Ascending aorta (tissue), 2 donors: ENCODE measurements at regions of chr3 and their contacts with region 1.

Region 1: DNA sequence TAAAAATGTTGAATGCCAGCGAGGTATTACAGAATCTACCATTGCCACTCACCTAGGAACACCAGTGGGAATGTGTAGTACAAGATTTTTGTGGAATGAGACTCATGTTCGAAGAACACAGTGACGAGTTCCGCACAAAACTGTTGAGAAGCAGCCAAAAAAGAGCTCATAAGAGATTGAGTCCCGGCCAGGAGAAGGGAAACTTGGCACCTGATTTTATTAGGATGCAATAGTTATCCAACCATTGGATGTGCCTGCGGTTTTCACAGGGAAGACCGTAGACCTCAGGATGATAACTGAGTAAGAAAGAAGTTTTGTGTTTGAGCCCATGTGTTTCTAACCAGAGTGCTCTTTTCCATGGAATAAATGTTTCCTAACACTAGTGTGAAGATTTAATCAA is 88.9 kb downstream of the PTPRG start:
- DNase-seq: peak in 1 of 2 donors; percentile 80
- H3K4me3 ChIP-seq: no peak overlapping the region
- H3K27ac ChIP-seq: peak overlapping the region; percentile 22 to 33
- H3K4me1 ChIP-seq: peaks cover 0 to 8% of the 10 kb centered on the region in 2 donors
- H3K27me3 ChIP-seq: no peaks in the 10 kb centered on the region
- CTCF ChIP-seq: no peak

Region 2: GRCh38 chr3:61664095-61664482 is 13.8 kb after region 1 on chr3:
- intact Hi-C with region 1: no loop called
- DNase-seq: no peak
- H3K4me3 ChIP-seq: no peak overlapping the region
- H3K27ac ChIP-seq: no peak overlapping the region
- H3K4me1 ChIP-seq: peaks cover 0 to 16% of the 10 kb centered on the region in 2 donors
- H3K27me3 ChIP-seq: no peaks in the 10 kb centered on the region
- CTCF ChIP-seq: no peak

Region 3: DNA sequence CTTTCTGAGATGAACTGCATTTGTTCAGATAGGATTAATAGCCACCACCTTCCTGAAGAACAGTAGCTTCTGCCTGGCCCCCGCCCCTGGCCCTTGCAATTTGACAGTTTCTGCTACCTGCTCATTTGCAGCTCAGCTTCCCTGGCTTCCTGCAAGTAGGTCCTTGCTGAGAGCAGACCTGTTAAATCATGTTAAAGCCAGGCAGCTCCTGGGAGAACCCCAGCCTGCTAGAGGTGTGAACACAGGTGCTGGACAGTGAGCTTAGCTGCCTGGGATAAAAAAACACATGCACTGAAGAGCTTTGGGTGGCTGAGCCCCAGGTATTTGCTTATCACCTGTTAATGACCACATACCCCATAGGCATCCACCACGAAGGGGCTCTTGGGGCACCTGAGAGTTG is 54.5 kb after region 1 on chr3:
- intact Hi-C with region 1: loop called (anchors 10 kb)
- DNase-seq: no peak
- H3K4me3 ChIP-seq: no peak overlapping the region
- H3K27ac ChIP-seq: no peak overlapping the region
- H3K4me1 ChIP-seq: peaks cover 0 to 4% of the 10 kb centered on the region in 2 donors
- H3K27me3 ChIP-seq: no peaks in the 10 kb centered on the region
- CTCF ChIP-seq: no peak

Region 4: DNA sequence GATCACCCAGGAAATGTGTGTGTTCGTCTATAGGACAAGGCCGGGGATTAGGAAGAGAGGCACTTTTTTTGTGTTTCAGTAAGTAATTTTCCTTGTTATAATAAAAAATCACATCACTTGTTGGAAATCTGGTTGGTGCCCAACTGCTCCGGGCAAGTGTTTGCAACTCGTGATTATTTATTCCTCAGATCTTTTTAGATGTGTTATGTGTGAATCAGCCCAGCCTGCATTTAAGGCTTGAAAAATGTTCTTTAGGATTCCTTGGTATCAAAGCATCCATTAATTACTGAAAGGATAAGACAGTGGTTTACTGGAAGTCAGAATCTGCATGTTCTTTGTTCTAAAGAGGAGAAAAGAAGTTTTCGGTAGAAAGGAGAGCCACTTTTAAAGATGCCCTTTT is 377.5 kb after region 1 on chr3:
- intact Hi-C with region 1: no loop called
- DNase-seq: no peak
- H3K4me3 ChIP-seq: no peak overlapping the region
- H3K27ac ChIP-seq: no peak overlapping the region
- H3K4me1 ChIP-seq: peaks cover 0 to 5% of the 10 kb centered on the region in 2 donors
- H3K27me3 ChIP-seq: no peaks in the 10 kb centered on the region
- CTCF ChIP-seq: no peak